ENCODE measurements at regions of chr17 and their contacts with region 1.

Region 1: GRCh38 chr17:38735161-38735997 is 5.2 kb downstream of the CISD3 start:
- DNase-seq: peak; percentile 54 to 90 (median 80)
- ATAC-seq: peak; percentile 55
- H3K4me3 ChIP-seq: no peak overlapping the region
- H3K4me3 Mint-ChIP-seq: no peak overlapping the region
- H3K27ac ChIP-seq: no peak overlapping the region
- H3K27ac Mint-ChIP-seq: no peak overlapping the region
- H3K4me1 ChIP-seq: peaks cover 28% of the 10 kb centered on the region
- H3K4me1 Mint-ChIP-seq: peaks cover 42% of the 10 kb centered on the region
- H3K27me3 ChIP-seq: no peaks in the 10 kb centered on the region
- H3K27me3 Mint-ChIP-seq: no peaks in the 10 kb centered on the region
- CTCF ChIP-seq: peak; percentile 86

Region 2: GRCh38 chr17:38557836-38558727 is 177.3 kb before region 1 on chr17:
- CTCF ChIA-PET with region 1: interaction called, 27 read pairs
- POLR2A ChIA-PET with region 1: interaction called, 5 read pairs
- intact Hi-C with region 1: loop called (anchors 1 kb)
- DNase-seq: peak; percentile 75 to 94 (median 88)
- ATAC-seq: peak; percentile 74
- H3K4me3 ChIP-seq: peak overlapping the region; percentile 60 to 77
- H3K4me3 Mint-ChIP-seq: peak overlapping the region; percentile 92
- H3K27ac ChIP-seq: no peak overlapping the region
- H3K27ac Mint-ChIP-seq: no peak overlapping the region
- H3K4me1 ChIP-seq: peaks cover 28% of the 10 kb centered on the region
- H3K4me1 Mint-ChIP-seq: peaks cover 26% of the 10 kb centered on the region
- H3K27me3 ChIP-seq: peaks cover 17 to 27% of the 10 kb centered on the region in 2 experiments
- H3K27me3 Mint-ChIP-seq: peaks cover 24% of the 10 kb centered on the region
- CTCF ChIP-seq: peak; percentile 93

Region 3: GRCh38 chr17:38674749-38675615 is 60.4 kb before region 1 on chr17 and contains the start of gene EPOP:
- CTCF ChIA-PET with region 1: interaction called, 162 read pairs
- POLR2A ChIA-PET with region 1: interaction called, 11 read pairs
- intact Hi-C with region 1: loop called (anchors 1 kb)
- DNase-seq: peak; percentile 51 to 91 (median 80)
- ATAC-seq: peak; percentile 80
- H3K4me3 ChIP-seq: peak within 1 kb of the TSS; percentile 34 to 58
- H3K4me3 Mint-ChIP-seq: peak within 1 kb of the TSS; percentile 75
- H3K27ac ChIP-seq: no peak within 1 kb of the TSS
- H3K27ac Mint-ChIP-seq: no peak within 1 kb of the TSS
- H3K4me1 ChIP-seq: peaks cover 17% of the 10 kb centered on the region
- H3K4me1 Mint-ChIP-seq: peaks cover 26% of the 10 kb centered on the region
- H3K27me3 ChIP-seq: peaks cover 4 to 14% of the 10 kb centered on the region in 2 experiments
- H3K27me3 Mint-ChIP-seq: peaks cover 28% of the 10 kb centered on the region
- CTCF ChIP-seq: no peak
- total RNA-seq, gene EPOP: 0.89 to 0.98 TPM

Region 4: DNA sequence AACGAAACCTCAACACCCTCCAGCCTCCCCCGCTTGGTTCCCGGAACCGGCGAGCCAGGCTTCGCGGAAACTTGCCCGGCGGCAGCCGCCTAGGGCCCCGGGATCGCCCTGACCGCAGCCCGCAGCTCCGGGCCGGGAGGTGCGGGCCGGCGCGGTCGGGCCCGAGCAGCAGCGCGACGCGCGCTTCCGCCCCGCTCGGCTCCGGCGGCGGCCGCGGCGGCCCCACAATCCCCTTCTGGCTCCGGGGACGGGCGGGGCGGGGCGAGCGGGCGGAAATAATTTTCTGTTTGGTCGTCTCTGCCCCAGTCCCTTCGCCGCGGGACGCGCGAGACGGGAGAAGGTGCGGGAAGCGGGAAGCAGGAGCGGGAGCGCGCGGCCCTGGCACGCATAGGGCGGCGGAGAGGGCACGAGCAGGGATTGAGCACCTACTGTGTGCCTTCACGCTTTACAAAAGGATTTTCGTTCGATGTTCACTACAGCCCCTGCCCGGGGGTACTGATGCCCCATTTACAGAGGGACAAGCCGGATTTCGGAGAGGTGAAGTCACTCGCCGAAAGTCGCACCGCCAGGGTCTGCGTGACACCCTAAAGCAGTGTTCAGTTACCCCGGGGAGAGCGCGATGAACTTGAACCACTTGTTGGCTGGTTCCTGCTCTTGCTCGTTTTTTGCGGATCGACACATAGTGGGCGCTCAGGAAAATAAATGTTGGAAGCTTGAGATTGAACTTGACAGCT is 33.0 kb before region 1 on chr17:
- CTCF ChIA-PET with region 1: interaction called, 16 read pairs
- POLR2A ChIA-PET with region 1: interaction called, 25 read pairs
- intact Hi-C with region 1: loop called (anchors 1 kb)
- DNase-seq: peak; percentile 58 to 91 (median 78)
- ATAC-seq: peak; percentile 27
- H3K4me3 ChIP-seq: peak overlapping the region; percentile 96 to 97
- H3K4me3 Mint-ChIP-seq: peak overlapping the region; percentile 99
- H3K27ac ChIP-seq: peak overlapping the region; percentile 70 to 94
- H3K27ac Mint-ChIP-seq: peak overlapping the region; percentile 97
- H3K4me1 ChIP-seq: peaks cover 33% of the 10 kb centered on the region
- H3K4me1 Mint-ChIP-seq: peaks cover 51% of the 10 kb centered on the region
- H3K27me3 ChIP-seq: no peaks in the 10 kb centered on the region
- H3K27me3 Mint-ChIP-seq: no peaks in the 10 kb centered on the region
- CTCF ChIP-seq: no peak

Region 5: DNA sequence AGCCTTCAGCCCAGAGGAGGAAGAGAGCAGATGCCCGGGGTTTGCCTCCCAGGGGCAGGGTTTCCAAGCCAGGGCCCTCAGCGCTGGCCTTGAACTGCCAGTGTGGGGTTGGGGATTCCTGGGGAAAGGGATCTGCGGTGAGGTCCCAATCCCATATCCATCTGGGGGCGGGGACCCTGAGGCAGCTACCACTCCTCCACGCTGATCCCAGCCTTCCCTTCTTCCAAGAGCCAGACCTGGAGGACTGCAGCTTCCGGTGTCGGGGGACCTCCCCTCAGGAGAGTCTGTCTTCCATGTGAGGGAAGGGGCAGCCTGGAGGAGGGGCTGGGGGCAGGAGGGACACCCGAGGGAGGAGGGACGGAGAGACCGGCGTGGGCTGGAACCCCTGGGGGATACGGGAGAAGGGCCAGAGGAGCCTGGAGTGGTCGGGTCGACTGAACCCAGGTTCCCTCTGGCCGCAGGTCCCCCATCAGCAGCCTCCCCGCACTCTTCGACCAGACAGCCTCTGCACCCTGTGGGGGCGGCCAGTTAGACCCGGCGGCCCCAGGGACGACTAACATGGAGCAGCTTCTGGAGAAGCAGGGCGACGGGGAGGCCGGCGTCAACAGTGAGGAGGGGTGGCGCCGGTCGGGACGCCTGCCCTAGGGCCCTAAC is 16.0 kb before region 1 on chr17:
- CTCF ChIA-PET with region 1: interaction called, 11 read pairs
- POLR2A ChIA-PET with region 1: interaction called, 3 read pairs
- intact Hi-C with region 1: no loop called
- DNase-seq: no peak
- ATAC-seq: no peak
- H3K4me3 ChIP-seq: no peak overlapping the region
- H3K4me3 Mint-ChIP-seq: no peak overlapping the region
- H3K27ac ChIP-seq: no peak overlapping the region
- H3K27ac Mint-ChIP-seq: no peak overlapping the region
- H3K4me1 ChIP-seq: peaks cover 9% of the 10 kb centered on the region
- H3K4me1 Mint-ChIP-seq: peaks cover 31% of the 10 kb centered on the region
- H3K27me3 ChIP-seq: no peaks in the 10 kb centered on the region
- H3K27me3 Mint-ChIP-seq: no peaks in the 10 kb centered on the region
- CTCF ChIP-seq: no peak

Region 6: DNA sequence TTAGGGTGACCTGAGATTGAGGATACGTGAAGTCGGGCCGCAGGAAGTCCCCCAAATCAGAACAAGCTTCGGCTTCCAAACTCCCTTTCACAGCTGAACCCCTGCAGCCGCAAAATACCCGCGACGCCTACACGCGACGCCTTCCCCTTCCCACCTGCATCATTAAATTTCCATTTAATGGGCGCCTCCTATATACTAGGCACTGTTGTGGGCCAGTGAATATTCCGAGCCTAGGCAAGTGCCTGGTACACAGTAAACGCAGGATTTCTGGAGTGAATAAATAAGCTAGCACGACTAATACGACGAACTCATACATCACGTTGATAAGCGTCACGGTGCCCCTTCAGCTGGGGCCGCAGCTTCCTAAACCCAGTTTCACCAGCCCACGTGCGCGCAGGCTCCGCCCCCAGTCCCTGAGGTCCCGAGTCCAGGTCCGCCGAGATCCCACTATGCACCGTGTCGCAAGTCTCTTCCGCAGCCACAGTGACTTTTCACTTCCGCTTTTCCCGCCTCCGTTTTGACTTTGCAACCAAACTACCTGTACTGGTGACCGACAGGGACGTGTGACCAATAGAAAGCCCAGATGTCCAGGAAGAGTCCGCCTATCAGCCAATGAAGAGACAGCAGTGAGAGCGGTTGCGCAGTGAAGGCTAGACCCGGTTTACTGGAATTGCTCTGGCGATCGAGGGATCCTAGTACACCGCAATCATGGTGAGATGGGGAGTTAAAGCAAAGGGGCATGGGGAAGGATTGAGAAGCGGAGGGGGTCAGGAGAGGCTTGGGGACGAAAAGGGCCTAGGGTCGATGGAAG is 16.9 kb after region 1 on chr17 and contains the start of gene PSMB3:
- CTCF ChIA-PET with region 1: interaction called, 24 read pairs
- POLR2A ChIA-PET with region 1: interaction called, 8 read pairs
- intact Hi-C with region 1: loop called (anchors 1 kb)
- DNase-seq: peak; percentile 90 to 100 (median 95)
- ATAC-seq: peak; percentile 87
- H3K4me3 ChIP-seq: peak within 1 kb of the TSS; percentile 88 to 99
- H3K4me3 Mint-ChIP-seq: peak within 1 kb of the TSS; percentile 96
- H3K27ac ChIP-seq: peak within 1 kb of the TSS; percentile 70 to 85
- H3K27ac Mint-ChIP-seq: peak within 1 kb of the TSS; percentile 97
- H3K4me1 ChIP-seq: peaks cover 53% of the 10 kb centered on the region
- H3K4me1 Mint-ChIP-seq: peaks cover 54% of the 10 kb centered on the region
- H3K27me3 ChIP-seq: peaks cover 21 to 31% of the 10 kb centered on the region in 2 experiments
- H3K27me3 Mint-ChIP-seq: peaks cover 19% of the 10 kb centered on the region
- CTCF ChIP-seq: no peak
- total RNA-seq, gene PSMB3: 53.6 to 64.2 TPM

Region 7: DNA sequence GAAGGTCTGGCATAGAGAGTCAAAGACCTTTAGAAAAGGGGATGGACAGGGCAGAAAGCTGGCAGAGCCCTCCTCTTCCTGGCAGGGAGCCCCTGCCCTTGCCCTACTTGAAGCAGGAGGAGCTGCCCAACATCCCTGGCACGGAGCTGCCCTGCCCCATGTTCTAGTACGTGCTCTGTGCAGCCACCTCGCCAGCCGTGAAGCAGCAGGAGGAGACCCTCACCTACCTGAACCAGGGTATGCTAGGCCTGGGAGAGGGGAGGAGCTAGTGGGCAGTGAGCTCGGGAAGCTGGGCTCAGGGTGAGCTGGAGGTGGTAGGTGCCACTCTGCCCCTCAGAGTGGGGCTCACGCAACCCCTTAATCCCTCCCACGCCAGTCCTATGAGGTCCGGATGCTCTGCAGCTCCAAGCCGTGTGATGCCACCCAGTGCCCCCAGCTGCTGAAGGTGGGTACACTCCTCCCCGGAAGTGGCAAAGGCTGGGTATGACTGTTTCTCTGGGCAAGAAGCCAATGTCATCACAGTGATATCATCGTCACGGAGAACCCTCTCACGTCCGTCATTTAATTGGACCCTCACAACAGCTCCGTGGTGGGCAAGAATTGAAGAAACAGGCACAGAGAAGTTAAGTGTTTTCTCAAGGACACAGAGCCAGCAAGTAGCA is 503.1 kb after region 1 on chr17:
- CTCF ChIA-PET with region 1: no interaction called
- POLR2A ChIA-PET with region 1: no interaction called
- intact Hi-C with region 1: no loop called
- DNase-seq: peak; percentile 67 to 97 (median 82)
- ATAC-seq: peak; percentile 84
- H3K4me3 ChIP-seq: peak overlapping the region; percentile 33 to 38
- H3K4me3 Mint-ChIP-seq: peak overlapping the region; percentile 62
- H3K27ac ChIP-seq: peak overlapping the region; percentile 66 to 92
- H3K27ac Mint-ChIP-seq: peak overlapping the region; percentile 87
- H3K4me1 ChIP-seq: peaks cover 44% of the 10 kb centered on the region
- H3K4me1 Mint-ChIP-seq: peaks cover 30% of the 10 kb centered on the region
- H3K27me3 ChIP-seq: no peaks in the 10 kb centered on the region
- H3K27me3 Mint-ChIP-seq: no peaks in the 10 kb centered on the region
- CTCF ChIP-seq: no peak